ENCODE measurements at regions of chr1 and their contacts with region 1.

Region 1: GRCh38 chr1:44747878-44748277 is 8.2 kb downstream of the KIF2C start:
- DNase-seq: no peak
- ATAC-seq: no peak
- H3K4me3 ChIP-seq: no peak overlapping the region
- H3K27ac ChIP-seq: no peak overlapping the region
- H3K4me1 ChIP-seq: no peaks in the 10 kb centered on the region
- H3K27me3 ChIP-seq: no peaks in the 10 kb centered on the region
- CTCF ChIP-seq: no peak

Region 2: GRCh38 chr1:44609412-44609767 is 138.5 kb before region 1 on chr1:
- intact Hi-C with region 1: no loop called
- DNase-seq: peak; percentile 57 to 82
- ATAC-seq: peak; percentile 92 to 97 (median 94)
- H3K4me3 ChIP-seq: no peak overlapping the region
- H3K27ac ChIP-seq: no peak overlapping the region
- H3K4me1 ChIP-seq: no peaks in the 10 kb centered on the region
- H3K27me3 ChIP-seq: peaks cover 0 to 3% (median 0%) of the 10 kb centered on the region in 3 donors
- CTCF ChIP-seq: peak; percentile 72

Region 3: GRCh38 chr1:44693159-44693558 is 54.7 kb before region 1 on chr1:
- intact Hi-C with region 1: loop called in 1 of 2 experiments (anchors 2 kb)
- DNase-seq: no peak
- ATAC-seq: no peak
- H3K4me3 ChIP-seq: no peak overlapping the region
- H3K27ac ChIP-seq: no peak overlapping the region
- H3K4me1 ChIP-seq: no peaks in the 10 kb centered on the region
- H3K27me3 ChIP-seq: no peaks in the 10 kb centered on the region
- CTCF ChIP-seq: no peak

Measured in psoas muscle (tissue), 8 donors.